Transverse colon (tissue), 4 donors: ENCODE measurements at regions of chr3 and their contacts with region 1.

Region 1: GRCh38 chr3:170154569-170155143 is 26.9 kb downstream of the PHC3 start:
- DNase-seq: no peak
- H3K4me3 ChIP-seq: no peak overlapping the region
- H3K27ac ChIP-seq: peak overlapping the region; percentile 69 to 78 (median 74)
- H3K4me1 ChIP-seq: peaks cover 13 to 47% (median 25%) of the 10 kb centered on the region in 4 donors
- H3K27me3 ChIP-seq: no peaks in the 10 kb centered on the region
- CTCF ChIP-seq: no peak
- EP300 ChIP-seq: no peak
- POLR2A ChIP-seq: no peak

Region 2: GRCh38 chr3:170107941-170108340 is 46.7 kb before region 1 on chr3:
- in situ Hi-C with region 1: no loop called
- intact Hi-C with region 1: no loop called
- DNase-seq: no peak
- H3K4me3 ChIP-seq: no peak overlapping the region
- H3K27ac ChIP-seq: no peak overlapping the region
- H3K4me1 ChIP-seq: no peaks in the 10 kb centered on the region
- H3K27me3 ChIP-seq: no peaks in the 10 kb centered on the region
- CTCF ChIP-seq: no peak
- EP300 ChIP-seq: no peak
- POLR2A ChIP-seq: no peak

Region 3: GRCh38 chr3:170196833-170197232 is 42.2 kb after region 1 on chr3:
- in situ Hi-C with region 1: no loop called
- intact Hi-C with region 1: no loop called
- DNase-seq: no peak
- H3K4me3 ChIP-seq: no peak overlapping the region
- H3K27ac ChIP-seq: no peak overlapping the region
- H3K4me1 ChIP-seq: no peaks in the 10 kb centered on the region
- H3K27me3 ChIP-seq: no peaks in the 10 kb centered on the region
- CTCF ChIP-seq: no peak
- EP300 ChIP-seq: no peak
- POLR2A ChIP-seq: no peak

Region 4: DNA sequence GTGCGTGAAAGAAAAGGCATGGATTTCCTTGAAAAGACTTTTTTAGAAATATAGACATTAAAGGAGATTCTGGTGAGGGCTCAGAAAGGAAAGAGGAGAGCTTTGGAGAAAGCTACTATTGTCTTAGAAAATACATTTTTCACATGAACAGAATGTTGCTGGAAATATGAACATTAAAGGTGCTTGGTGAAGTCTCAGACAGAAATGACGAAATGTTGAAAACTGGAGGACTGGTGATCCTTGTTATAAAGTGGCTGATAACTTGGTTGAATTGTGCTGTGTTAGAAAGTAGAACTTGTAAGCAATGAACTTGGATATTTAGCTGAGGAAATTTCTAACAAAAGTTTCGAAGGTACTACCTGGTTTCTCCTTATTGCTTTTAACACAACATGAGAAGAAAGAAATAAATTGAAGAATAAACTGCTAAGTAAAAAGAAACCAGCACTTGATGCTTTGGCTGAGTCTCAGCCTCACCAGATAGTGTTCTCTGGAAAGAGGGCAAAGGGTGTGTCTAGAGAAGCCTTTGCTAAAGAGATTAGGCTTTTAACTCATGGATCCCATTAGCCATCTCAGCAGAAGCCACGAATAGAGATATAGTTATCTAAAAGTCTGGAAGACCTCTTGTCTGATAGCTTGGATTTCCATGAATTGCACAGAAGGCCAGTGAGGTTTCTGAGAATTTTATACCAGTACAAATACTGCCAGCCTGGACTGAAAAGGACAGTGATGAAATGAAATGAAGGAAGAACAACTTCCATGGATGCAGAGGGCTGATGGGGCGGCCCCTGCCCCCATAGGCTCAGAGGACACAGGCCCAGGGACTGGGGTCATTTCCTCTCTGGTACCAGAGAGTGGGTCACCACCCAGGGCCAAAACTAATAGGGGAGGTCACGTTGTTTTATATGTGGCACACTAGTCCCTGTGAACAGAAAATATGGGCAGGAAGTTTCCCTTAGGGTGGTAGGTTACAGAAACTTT is 623.9 kb after region 1 on chr3:
- in situ Hi-C with region 1: no loop called
- intact Hi-C with region 1: loop called (anchors 5 kb)
- DNase-seq: no peak
- H3K4me3 ChIP-seq: no peak overlapping the region
- H3K27ac ChIP-seq: no peak overlapping the region
- H3K4me1 ChIP-seq: no peaks in the 10 kb centered on the region
- H3K27me3 ChIP-seq: peaks cover 7% of the 10 kb centered on the region
- CTCF ChIP-seq: no peak
- EP300 ChIP-seq: no peak
- POLR2A ChIP-seq: no peak